ENCODE measurements at regions of chr11 and their contacts with region 1.

Region 1: GRCh38 chr11:60334005-60334620 is 7.1 kb downstream of the MS4A6E start:
- DNase-seq: peak; percentile 46
- ATAC-seq: peak; percentile 81
- H3K4me3 ChIP-seq: peak overlapping the region in 1 of 2 experiments; percentile 7; a peak in 1 of 4 replicates
- H3K27ac ChIP-seq: no peak overlapping the region
- H3K4me1 ChIP-seq: no peaks in the 10 kb centered on the region
- H3K27me3 ChIP-seq: no peaks in the 10 kb centered on the region
- CTCF ChIP-seq: peak; percentile 84

Region 2: GRCh38 chr11:60169264-60169915 is 164.7 kb before region 1 on chr11:
- CTCF ChIA-PET with region 1: no interaction called
- POLR2A ChIA-PET with region 1: no interaction called
- in situ Hi-C with region 1: no loop called
- intact Hi-C with region 1: no loop called
- DNase-seq: peak; percentile 17
- ATAC-seq: no peak
- H3K4me3 ChIP-seq: no peak overlapping the region
- H3K27ac ChIP-seq: no peak overlapping the region
- H3K4me1 ChIP-seq: no peaks in the 10 kb centered on the region
- H3K27me3 ChIP-seq: no peaks in the 10 kb centered on the region
- CTCF ChIP-seq: peak; percentile 60

Region 3: DNA sequence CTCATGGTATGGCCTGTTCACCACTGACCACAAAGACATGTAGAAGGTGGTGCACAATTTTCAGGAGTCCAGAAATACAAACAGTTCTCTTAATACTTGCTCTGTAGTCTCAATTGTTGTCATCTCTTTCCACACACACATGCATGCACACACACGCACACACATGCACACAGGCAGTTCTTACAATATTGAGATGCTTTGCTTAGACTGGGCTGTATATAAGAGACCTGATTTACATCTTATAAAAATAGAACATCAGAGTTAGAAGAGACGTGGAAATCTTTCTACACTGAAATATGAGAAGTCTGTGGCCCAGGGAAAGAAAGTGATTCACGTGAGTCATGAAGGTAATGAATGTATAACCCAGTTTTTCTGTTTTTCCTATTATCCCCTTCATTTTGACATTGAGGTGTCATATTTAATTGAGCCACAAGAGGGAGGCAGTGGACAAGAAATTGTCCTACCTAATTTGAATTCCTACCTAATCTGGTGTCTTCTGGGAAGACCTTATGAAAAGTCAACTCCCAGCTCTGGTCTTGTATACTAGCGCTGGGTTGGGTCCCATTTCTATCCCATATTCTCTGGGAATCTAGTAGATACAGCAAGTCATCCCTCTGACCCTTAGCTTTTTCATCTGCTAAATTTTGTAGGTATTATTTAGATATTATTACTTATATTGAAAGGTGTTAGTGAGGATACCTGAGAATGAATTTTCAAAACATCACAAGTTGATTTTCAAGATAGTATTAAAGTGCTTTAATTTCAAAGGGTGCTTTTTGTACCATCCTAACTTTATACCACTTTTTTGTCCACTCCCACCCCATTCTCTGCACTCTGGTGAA is 68.5 kb before region 1 on chr11:
- CTCF ChIA-PET with region 1: no interaction called
- POLR2A ChIA-PET with region 1: no interaction called
- in situ Hi-C with region 1: no loop called
- intact Hi-C with region 1: no loop called
- DNase-seq: peak; percentile 10
- ATAC-seq: 0 out of 2 replicates have a peak, but pooled peaks have one; percentile 60
- H3K4me3 ChIP-seq: no peak overlapping the region
- H3K27ac ChIP-seq: no peak overlapping the region
- H3K4me1 ChIP-seq: no peaks in the 10 kb centered on the region
- H3K27me3 ChIP-seq: no peaks in the 10 kb centered on the region; the same call in 1 of the 2 replicates
- CTCF ChIP-seq: peak; percentile 71

Region 4: DNA sequence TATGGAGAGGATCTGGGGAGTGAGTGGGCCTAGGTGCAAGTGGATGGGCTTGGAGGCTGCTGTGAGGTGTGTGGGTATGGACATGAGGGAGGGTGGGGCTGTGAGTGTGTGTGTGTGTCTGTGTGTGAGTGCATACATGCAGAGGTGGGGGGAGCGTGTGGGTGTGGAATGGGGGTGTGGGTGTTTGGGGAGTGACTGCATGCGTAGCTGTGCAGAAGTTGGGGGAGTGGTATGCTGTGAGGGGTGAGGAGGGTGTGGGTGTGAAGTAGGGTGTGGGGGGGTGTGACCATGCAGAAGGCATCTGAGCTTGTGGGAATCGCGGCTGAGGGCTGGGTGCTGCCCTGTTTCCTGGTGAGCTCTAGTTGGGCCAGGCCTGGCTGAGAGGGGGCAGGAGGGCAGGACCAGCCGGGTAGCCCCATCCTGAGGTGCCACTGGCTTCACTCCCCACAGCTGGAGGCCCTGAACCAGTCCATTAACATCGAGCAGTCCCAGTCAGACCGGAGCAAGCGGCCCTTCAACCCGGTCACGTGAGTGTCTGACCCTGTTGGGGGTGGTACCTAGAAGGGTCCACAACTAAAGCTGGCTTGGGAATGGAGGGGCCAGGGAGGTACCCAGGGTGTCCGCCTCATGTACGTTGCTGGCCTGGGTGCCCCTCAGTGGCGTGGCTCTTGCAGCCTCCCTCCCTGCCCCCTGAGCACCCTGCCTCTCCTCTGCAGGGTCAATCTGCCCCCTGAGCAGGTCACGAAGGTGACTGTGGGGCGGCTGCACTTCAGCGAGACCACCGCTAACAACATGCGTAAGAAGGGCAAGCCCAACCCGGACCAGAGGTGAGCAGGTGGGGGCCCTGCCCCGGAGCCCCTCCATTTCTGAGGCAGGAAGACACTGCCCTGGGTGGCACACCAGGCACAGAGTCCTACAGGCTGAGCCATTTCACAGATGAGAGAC is 1441.8 kb after region 1 on chr11:
- CTCF ChIA-PET with region 1: no interaction called
- POLR2A ChIA-PET with region 1: interaction called, 15 read pairs
- in situ Hi-C with region 1: no loop called
- intact Hi-C with region 1: no loop called
- DNase-seq: no peak
- ATAC-seq: no peak
- H3K4me3 ChIP-seq: no peak overlapping the region
- H3K27ac ChIP-seq: no peak overlapping the region
- H3K4me1 ChIP-seq: peaks cover 3% of the 10 kb centered on the region; the same call in 1 of the 2 replicates
- H3K27me3 ChIP-seq: no peaks in the 10 kb centered on the region
- CTCF ChIP-seq: no peak